ENCODE measurements at regions of chr15 and their contacts with region 1.

Region 1: GRCh38 chr15:34367101-34368081 is at the start of gene LPCAT4:
- DNase-seq: peak; percentile 79 to 96 (median 90)
- ATAC-seq: peak; percentile 84
- H3K4me3 ChIP-seq: peak within 1 kb of the TSS; percentile 86 to 91
- H3K4me3 Mint-ChIP-seq: peak within 1 kb of the TSS; percentile 98
- H3K27ac ChIP-seq: peak within 1 kb of the TSS; percentile 75 to 89
- H3K27ac Mint-ChIP-seq: peak within 1 kb of the TSS; percentile 96
- H3K4me1 ChIP-seq: peaks cover 21% of the 10 kb centered on the region
- H3K4me1 Mint-ChIP-seq: peaks cover 29% of the 10 kb centered on the region
- H3K27me3 ChIP-seq: no peaks in the 10 kb centered on the region
- H3K27me3 Mint-ChIP-seq: no peaks in the 10 kb centered on the region
- CTCF ChIP-seq: peak; percentile 92
- total RNA-seq, gene LPCAT4: 30.9 to 36.3 TPM

Region 2: GRCh38 chr15:33742800-33743199 is 624.6 kb before region 1 on chr15:
- CTCF ChIA-PET with region 1: no interaction called
- POLR2A ChIA-PET with region 1: no interaction called
- intact Hi-C with region 1: no loop called
- DNase-seq: no peak
- ATAC-seq: no peak
- H3K4me3 ChIP-seq: no peak overlapping the region
- H3K4me3 Mint-ChIP-seq: no peak overlapping the region
- H3K27ac ChIP-seq: no peak overlapping the region
- H3K27ac Mint-ChIP-seq: no peak overlapping the region
- H3K4me1 ChIP-seq: no peaks in the 10 kb centered on the region
- H3K4me1 Mint-ChIP-seq: peaks cover 2% of the 10 kb centered on the region
- H3K27me3 ChIP-seq: no peaks in the 10 kb centered on the region
- H3K27me3 Mint-ChIP-seq: peaks cover 7% of the 10 kb centered on the region
- CTCF ChIP-seq: no peak

Region 3: GRCh38 chr15:34065941-34066340 is 301.4 kb before region 1 on chr15:
- CTCF ChIA-PET with region 1: interaction called, 4 read pairs
- POLR2A ChIA-PET with region 1: no interaction called
- intact Hi-C with region 1: loop called (anchors 1 to 10 kb)
- DNase-seq: no peak
- ATAC-seq: no peak
- H3K4me3 ChIP-seq: no peak overlapping the region
- H3K4me3 Mint-ChIP-seq: no peak overlapping the region
- H3K27ac ChIP-seq: no peak overlapping the region
- H3K27ac Mint-ChIP-seq: no peak overlapping the region
- H3K4me1 ChIP-seq: no peaks in the 10 kb centered on the region
- H3K4me1 Mint-ChIP-seq: peaks cover 3% of the 10 kb centered on the region
- H3K27me3 ChIP-seq: no peaks in the 10 kb centered on the region
- H3K27me3 Mint-ChIP-seq: no peaks in the 10 kb centered on the region
- CTCF ChIP-seq: no peak

Region 4: GRCh38 chr15:34223904-34224596 is 143.3 kb before region 1 on chr15:
- CTCF ChIA-PET with region 1: interaction called, 11 read pairs
- POLR2A ChIA-PET with region 1: interaction called, 3 read pairs
- intact Hi-C with region 1: loop called in 1 of 2 experiments (anchors 1 kb)
- DNase-seq: peak in 2 of 9 experiments; percentile 11 to 34
- ATAC-seq: no peak
- H3K4me3 ChIP-seq: peak overlapping the region; percentile 53 to 86
- H3K4me3 Mint-ChIP-seq: peak overlapping the region; percentile 93
- H3K27ac ChIP-seq: peak overlapping the region; percentile 75 to 93
- H3K27ac Mint-ChIP-seq: peak overlapping the region; percentile 99
- H3K4me1 ChIP-seq: peaks cover 15% of the 10 kb centered on the region
- H3K4me1 Mint-ChIP-seq: peaks cover 29% of the 10 kb centered on the region
- H3K27me3 ChIP-seq: no peaks in the 10 kb centered on the region
- H3K27me3 Mint-ChIP-seq: no peaks in the 10 kb centered on the region
- CTCF ChIP-seq: no peak

Region 5: GRCh38 chr15:34318277-34319079 is 48.9 kb before region 1 on chr15:
- CTCF ChIA-PET with region 1: interaction called, 13 read pairs
- POLR2A ChIA-PET with region 1: interaction called, 4 read pairs
- intact Hi-C with region 1: no loop called
- DNase-seq: peak in 4 of 9 experiments; percentile 35 to 62 (median 42)
- ATAC-seq: peak; percentile 72
- H3K4me3 ChIP-seq: peak overlapping the region; percentile 43 to 63
- H3K4me3 Mint-ChIP-seq: peak overlapping the region; percentile 94
- H3K27ac ChIP-seq: peak overlapping the region; percentile 39 to 58
- H3K27ac Mint-ChIP-seq: peak overlapping the region; percentile 97
- H3K4me1 ChIP-seq: peaks cover 46% of the 10 kb centered on the region
- H3K4me1 Mint-ChIP-seq: peaks cover 62% of the 10 kb centered on the region
- H3K27me3 ChIP-seq: no peaks in the 10 kb centered on the region
- H3K27me3 Mint-ChIP-seq: no peaks in the 10 kb centered on the region
- CTCF ChIP-seq: no peak

Region 6: DNA sequence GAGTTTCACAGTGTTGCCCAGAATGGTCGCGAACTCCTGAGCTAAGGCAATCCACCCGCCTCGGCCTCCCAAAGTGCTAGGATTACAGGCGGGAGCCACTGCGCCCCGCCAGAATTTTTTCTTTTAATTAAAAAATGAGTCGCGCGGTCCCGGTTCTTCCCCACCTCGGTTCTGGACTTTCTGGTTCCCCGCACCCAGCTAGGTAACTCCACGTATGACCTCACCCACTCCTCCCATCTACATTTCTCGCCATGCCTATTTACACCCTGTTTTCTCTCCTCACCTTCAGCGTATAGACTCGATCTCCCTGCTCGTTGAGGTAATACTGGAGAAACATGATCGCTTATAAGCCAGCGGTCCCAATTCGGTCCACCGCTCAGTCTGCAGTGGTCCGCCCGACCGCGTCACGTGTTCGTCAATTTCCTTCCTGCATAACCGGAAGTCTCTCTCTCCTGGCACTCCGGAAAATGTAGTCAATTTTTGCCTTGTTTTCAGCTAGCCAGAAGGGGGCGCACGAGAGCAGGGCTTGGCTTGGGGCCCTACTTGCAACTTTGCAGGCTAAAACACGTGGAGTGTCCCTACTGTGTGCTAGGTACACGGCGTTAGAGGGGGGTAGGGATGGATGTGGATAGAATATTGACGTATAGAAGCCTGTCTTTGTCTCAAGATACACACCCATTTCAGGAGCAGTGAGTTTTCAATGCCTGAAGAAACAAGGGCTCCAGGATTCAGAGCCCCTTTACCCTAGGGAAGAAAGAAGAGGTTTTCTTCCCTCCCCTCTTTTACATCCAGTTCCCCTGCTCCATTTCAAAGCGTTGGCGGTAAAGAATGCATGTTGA is 24.4 kb before region 1 on chr15 and contains the starts of genes NOP10 and NUTM1:
- CTCF ChIA-PET with region 1: interaction called, 36 read pairs
- POLR2A ChIA-PET with region 1: interaction called, 56 read pairs
- intact Hi-C with region 1: loop called (anchors 1 kb)
- DNase-seq: peak; percentile 87 to 96 (median 93)
- ATAC-seq: peak; percentile 83
- H3K4me3 ChIP-seq: peak within 1 kb of the TSS; percentile 88 to 90
- H3K4me3 Mint-ChIP-seq: no peak within 1 kb of the TSS
- H3K27ac ChIP-seq: peak within 1 kb of the TSS; percentile 82 to 90
- H3K27ac Mint-ChIP-seq: peak within 1 kb of the TSS; percentile 85
- H3K4me1 ChIP-seq: peaks cover 20% of the 10 kb centered on the region
- H3K4me1 Mint-ChIP-seq: peaks cover 24% of the 10 kb centered on the region
- H3K27me3 ChIP-seq: no peaks in the 10 kb centered on the region
- H3K27me3 Mint-ChIP-seq: no peaks in the 10 kb centered on the region
- CTCF ChIP-seq: peak; percentile 90
- total RNA-seq, gene NOP10: 36.6 to 40.1 TPM
- total RNA-seq, gene NUTM1: not detected

Region 7: GRCh38 chr15:34773917-34774316 is 406.5 kb after region 1 on chr15:
- CTCF ChIA-PET with region 1: no interaction called
- POLR2A ChIA-PET with region 1: no interaction called
- intact Hi-C with region 1: no loop called
- DNase-seq: no peak
- ATAC-seq: no peak
- H3K4me3 ChIP-seq: no peak overlapping the region
- H3K4me3 Mint-ChIP-seq: no peak overlapping the region
- H3K27ac ChIP-seq: no peak overlapping the region
- H3K27ac Mint-ChIP-seq: no peak overlapping the region
- H3K4me1 ChIP-seq: no peaks in the 10 kb centered on the region
- H3K4me1 Mint-ChIP-seq: no peaks in the 10 kb centered on the region
- H3K27me3 ChIP-seq: no peaks in the 10 kb centered on the region
- H3K27me3 Mint-ChIP-seq: peaks cover 17% of the 10 kb centered on the region
- CTCF ChIP-seq: no peak

Measured in CD8-positive, alpha-beta T cell (primary cell).